Endothelial cell of umbilical vein (primary cell): ENCODE measurements at regions of chr12 and their contacts with region 1.

Region 1: DNA sequence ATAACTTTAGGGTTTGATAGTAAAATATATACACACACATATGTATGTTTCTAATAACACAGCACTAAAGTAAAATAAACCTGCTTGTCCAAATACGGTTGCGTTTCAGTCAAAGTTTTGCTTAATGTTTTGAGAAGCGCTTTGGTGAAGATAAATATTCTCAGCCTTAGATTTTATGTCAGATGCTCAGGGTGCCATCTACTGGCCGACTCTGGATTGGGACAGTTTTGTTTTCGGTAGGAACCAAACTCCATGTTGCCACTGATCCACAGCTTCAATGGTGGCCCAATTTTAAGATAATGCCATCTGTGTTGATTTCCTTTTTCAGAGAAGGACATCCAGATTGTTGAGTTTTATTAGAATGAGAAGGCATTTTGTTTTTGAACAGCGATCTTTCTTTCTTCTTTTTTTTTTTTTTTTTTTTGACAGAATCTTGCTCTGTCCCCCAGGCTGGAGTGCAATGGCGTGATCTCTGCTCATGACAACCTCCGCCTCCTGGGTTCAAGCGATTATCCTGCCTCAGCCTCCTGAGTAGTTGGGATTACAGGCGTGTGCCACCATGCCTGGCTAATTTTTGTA is 43.1 kb downstream of the LLPH start:
- DNase-seq: peak; percentile 67
- H3K4me3 ChIP-seq: no peak overlapping the region
- H3K27ac ChIP-seq: no peak overlapping the region
- H3K4me1 ChIP-seq: peaks cover 2% of the 10 kb centered on the region
- H3K27me3 ChIP-seq: no peaks in the 10 kb centered on the region
- CTCF ChIP-seq: peak; percentile 65 to 76
- POLR2A ChIP-seq: no peak

Region 2: GRCh38 chr12:65536876-65537661 is 550.4 kb before region 1 on chr12:
- CTCF ChIA-PET with region 1: no interaction called
- POLR2A ChIA-PET with region 1: no interaction called
- dilution Hi-C with region 1: no loop called
- intact Hi-C with region 1: loop called (anchors 1 kb)
- DNase-seq: peak; percentile 94
- H3K4me3 ChIP-seq: no peak overlapping the region
- H3K27ac ChIP-seq: peak overlapping the region; percentile 98
- H3K4me1 ChIP-seq: peaks cover 58% of the 10 kb centered on the region
- H3K27me3 ChIP-seq: no peaks in the 10 kb centered on the region
- CTCF ChIP-seq: no peak
- POLR2A ChIP-seq: peak; percentile 45

Region 3: GRCh38 chr12:65740873-65741600 is 346.4 kb before region 1 on chr12:
- CTCF ChIA-PET with region 1: no interaction called
- POLR2A ChIA-PET with region 1: no interaction called
- dilution Hi-C with region 1: no loop called
- intact Hi-C with region 1: loop called (anchors 1 kb)
- DNase-seq: peak; percentile 82
- H3K4me3 ChIP-seq: peak overlapping the region; percentile 75 to 88 (median 81)
- H3K27ac ChIP-seq: peak overlapping the region; percentile 77
- H3K4me1 ChIP-seq: peaks cover 5% of the 10 kb centered on the region
- H3K27me3 ChIP-seq: no peaks in the 10 kb centered on the region
- CTCF ChIP-seq: no peak
- POLR2A ChIP-seq: no peak

Region 4: GRCh38 chr12:65891987-65892481 is 195.4 kb before region 1 on chr12:
- CTCF ChIA-PET with region 1: interaction called, 3 read pairs
- POLR2A ChIA-PET with region 1: no interaction called
- dilution Hi-C with region 1: no loop called
- intact Hi-C with region 1: loop called (anchors 5 kb)
- DNase-seq: peak; percentile 91
- H3K4me3 ChIP-seq: peak overlapping the region in 1 of 3 experiments; percentile 17
- H3K27ac ChIP-seq: peak overlapping the region; percentile 96
- H3K4me1 ChIP-seq: peaks cover 45% of the 10 kb centered on the region
- H3K27me3 ChIP-seq: no peaks in the 10 kb centered on the region
- CTCF ChIP-seq: no peak
- POLR2A ChIP-seq: peak; percentile 55

Region 5: DNA sequence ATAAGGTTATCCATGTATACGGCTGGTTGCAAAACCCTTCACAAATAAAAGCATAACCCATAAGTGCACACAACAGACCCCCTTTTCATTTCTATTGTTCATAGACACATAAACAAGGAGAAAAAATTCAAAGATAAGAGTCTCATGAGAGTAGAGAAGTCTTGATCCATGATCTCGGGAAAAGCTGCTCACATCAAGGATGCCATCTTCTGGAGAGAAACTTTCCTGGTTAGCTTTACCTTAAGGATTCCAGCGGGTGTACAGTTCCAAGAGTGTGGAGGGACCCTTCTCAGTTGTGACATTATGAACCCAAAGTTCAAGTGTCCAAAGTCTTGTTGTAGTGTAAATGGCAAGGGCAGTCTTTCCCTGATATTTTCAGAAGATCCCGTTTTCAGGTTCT is 101.4 kb before region 1 on chr12:
- CTCF ChIA-PET with region 1: interaction called, 13 read pairs
- POLR2A ChIA-PET with region 1: no interaction called
- dilution Hi-C with region 1: no loop called
- intact Hi-C with region 1: loop called (anchors 2 kb)
- DNase-seq: peak; percentile 28
- H3K4me3 ChIP-seq: no peak overlapping the region
- H3K27ac ChIP-seq: no peak overlapping the region
- H3K4me1 ChIP-seq: no peaks in the 10 kb centered on the region
- H3K27me3 ChIP-seq: no peaks in the 10 kb centered on the region
- CTCF ChIP-seq: peak in 1 of 2 donors; percentile 12
- POLR2A ChIP-seq: no peak

Region 6: GRCh38 chr12:66035288-66035966 is 52.0 kb before region 1 on chr12:
- CTCF ChIA-PET with region 1: interaction called, 11 read pairs
- POLR2A ChIA-PET with region 1: no interaction called
- dilution Hi-C with region 1: no loop called
- intact Hi-C with region 1: loop called (anchors 2 kb)
- DNase-seq: peak; percentile 71
- H3K4me3 ChIP-seq: no peak overlapping the region
- H3K27ac ChIP-seq: no peak overlapping the region
- H3K4me1 ChIP-seq: peaks cover 10% of the 10 kb centered on the region
- H3K27me3 ChIP-seq: peaks cover 1 to 3% of the 10 kb centered on the region in 2 experiments
- CTCF ChIP-seq: peak; percentile 26 to 35
- POLR2A ChIP-seq: no peak